ENCODE measurements at regions of chr19 and their contacts with region 1.

Region 1: DNA sequence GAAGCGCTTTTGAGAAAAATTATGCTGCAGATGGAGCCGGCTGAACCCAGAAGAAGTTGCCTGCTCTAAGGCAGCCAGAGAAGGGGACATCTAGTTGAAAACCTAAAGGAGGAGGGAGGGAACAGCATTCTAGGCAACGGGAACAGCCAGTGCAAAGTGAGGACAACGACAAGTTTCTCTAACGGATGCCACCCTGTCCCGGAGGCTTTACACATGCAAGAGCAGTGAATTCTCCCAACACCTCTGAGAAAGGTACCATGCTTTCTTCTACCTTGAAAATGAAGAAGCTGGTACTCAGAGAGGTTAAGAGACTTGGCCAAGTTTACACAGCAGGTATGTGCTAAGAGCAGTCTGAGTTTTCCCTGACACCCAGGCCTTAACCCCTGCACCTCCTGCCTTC is 5.9 kb downstream of the IFNL3 start:
- DNase-seq: no peak
- ATAC-seq: no peak
- H3K4me3 Mint-ChIP-seq: no peak overlapping the region
- H3K27ac Mint-ChIP-seq: no peak overlapping the region
- H3K4me1 Mint-ChIP-seq: peaks cover 19% of the 10 kb centered on the region
- H3K27me3 Mint-ChIP-seq: no peaks in the 10 kb centered on the region

Region 2: DNA sequence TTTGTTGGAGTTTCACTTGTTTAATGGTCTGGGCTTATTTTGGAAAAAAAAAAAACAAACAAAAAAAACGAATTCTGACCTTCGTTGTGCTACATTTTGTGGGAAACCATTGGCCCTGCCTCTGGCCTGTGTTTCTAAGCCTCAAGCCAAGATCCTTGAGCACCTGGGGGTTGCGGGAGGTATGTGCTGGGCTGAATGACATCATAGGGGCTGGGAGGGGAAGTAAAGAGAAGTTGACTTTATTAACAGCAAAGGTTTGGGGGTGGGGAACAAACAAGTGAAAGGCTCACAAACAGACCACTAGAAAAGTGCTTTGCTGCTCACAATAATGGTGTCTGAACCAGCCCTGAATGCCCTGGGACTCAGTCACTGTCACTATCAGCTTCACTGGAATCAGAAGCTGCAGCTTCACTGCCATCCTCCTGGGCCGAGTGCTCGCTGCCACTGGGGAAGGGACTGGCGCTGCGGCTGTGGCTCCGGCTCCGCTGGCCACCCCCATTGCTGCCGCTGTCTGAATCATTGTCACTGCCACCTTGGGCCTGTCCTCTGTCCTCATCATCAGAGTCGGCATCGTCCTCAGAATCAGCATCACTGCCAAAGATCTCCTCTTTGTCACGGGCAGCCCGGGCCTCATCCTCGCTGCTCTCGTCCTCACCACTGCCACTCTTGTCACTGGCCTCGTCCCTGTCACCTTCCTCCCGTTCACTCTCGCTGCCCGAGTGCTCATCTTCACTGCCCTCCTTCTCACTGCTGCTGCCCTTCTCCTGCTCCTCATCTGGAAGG is 146.9 kb after region 1 on chr19:
- CTCF ChIA-PET with region 1: no interaction called
- POLR2A ChIA-PET with region 1: interaction called, 13 read pairs
- intact Hi-C with region 1: no loop called
- DNase-seq: no peak
- ATAC-seq: no peak
- H3K4me3 Mint-ChIP-seq: no peak overlapping the region
- H3K27ac Mint-ChIP-seq: peak overlapping the region; percentile 22
- H3K4me1 Mint-ChIP-seq: peaks cover 11% of the 10 kb centered on the region
- H3K27me3 Mint-ChIP-seq: no peaks in the 10 kb centered on the region

Region 3: DNA sequence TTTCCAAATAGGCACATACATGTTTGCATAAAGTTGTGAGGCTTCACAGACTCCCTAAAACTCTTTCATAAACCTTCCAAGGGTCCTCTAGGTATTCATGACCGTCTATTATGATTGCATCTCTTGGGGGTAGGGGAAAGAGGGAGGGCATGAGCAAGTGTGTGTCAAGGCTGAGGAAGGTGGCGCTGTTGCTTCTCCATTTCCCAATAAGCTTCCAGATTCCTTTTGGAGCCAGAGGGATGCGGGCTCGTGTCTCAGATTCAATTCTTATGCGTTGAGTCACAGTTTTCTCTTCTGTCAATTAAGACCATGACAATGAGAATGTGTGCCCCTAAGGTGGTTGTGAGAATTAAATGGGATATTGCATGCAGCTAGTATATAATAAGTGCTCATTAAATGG is 1694.1 kb after region 1 on chr19:
- CTCF ChIA-PET with region 1: no interaction called
- POLR2A ChIA-PET with region 1: no interaction called
- intact Hi-C with region 1: no loop called
- DNase-seq: no peak
- ATAC-seq: no peak
- H3K4me3 Mint-ChIP-seq: no peak overlapping the region
- H3K27ac Mint-ChIP-seq: no peak overlapping the region
- H3K4me1 Mint-ChIP-seq: no peaks in the 10 kb centered on the region
- H3K27me3 Mint-ChIP-seq: peaks cover 13% of the 10 kb centered on the region

Measured in activated CD4-positive, alpha-beta T cell treated with anti-CD3 and anti-CD28 coated beads for 36 hours (primary cell).